ENCODE measurements at regions of chr4 and their contacts with region 1.

Region 1: DNA sequence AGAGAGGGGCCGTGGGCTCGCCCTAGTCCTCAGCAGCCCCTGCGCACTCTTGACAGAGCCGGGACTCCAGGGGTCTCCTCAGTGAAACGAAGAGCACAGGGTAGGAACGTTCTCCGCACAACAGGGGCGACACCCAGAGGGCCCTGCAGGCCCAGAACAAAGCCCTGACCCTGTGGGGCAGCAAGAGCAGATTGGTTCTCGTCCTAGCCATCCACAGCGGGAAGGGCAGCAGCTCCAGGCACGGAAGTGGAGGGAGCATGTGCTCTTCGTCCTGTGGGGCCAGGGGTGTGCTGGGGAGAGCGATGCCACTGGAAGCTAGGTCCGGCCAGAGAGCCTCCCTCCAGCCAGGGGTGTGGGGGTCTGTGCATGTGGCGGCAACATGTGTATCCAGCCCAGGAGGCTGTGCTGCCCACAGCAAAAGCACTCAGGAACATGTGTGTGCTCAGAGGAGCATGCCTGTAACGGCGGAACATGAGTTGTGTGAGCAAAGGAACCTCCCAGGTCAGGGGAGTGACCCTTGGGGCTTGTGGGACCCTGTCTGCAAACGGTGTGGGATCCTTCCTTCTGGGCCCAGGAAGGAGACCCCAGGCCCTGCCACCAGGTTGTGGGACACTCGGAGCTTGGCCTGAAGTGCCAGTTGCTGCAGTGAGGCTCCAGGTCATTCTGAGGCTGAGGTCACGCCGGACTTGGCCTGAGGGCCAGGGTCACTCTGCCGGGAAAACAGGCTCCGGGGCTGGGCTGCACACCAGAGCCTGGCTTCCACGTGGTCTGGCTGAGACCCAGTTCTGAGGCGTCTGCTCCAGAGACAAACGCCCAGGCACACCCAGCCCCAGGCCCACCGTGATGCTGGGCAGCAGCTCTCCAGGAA is 37.3 kb downstream of the CPLX1 start:
- DNase-seq: no peak
- H3K4me3 ChIP-seq: no peak overlapping the region
- H3K27ac ChIP-seq: no peak overlapping the region
- H3K4me1 ChIP-seq: no peaks in the 10 kb centered on the region
- H3K27me3 ChIP-seq: peaks cover 2% of the 10 kb centered on the region
- CTCF ChIP-seq: no peak

Region 2: GRCh38 chr4:575281-576141 is 213.2 kb before region 1 on chr4:
- CTCF ChIA-PET with region 1: no interaction called
- POLR2A ChIA-PET with region 1: no interaction called
- intact Hi-C with region 1: no loop called
- DNase-seq: peak; percentile 71
- H3K4me3 ChIP-seq: peak overlapping the region; percentile 51
- H3K27ac ChIP-seq: peak overlapping the region; percentile 57
- H3K4me1 ChIP-seq: peaks cover 16% of the 10 kb centered on the region
- H3K27me3 ChIP-seq: peaks cover 28% of the 10 kb centered on the region
- CTCF ChIP-seq: no peak

Region 3: DNA sequence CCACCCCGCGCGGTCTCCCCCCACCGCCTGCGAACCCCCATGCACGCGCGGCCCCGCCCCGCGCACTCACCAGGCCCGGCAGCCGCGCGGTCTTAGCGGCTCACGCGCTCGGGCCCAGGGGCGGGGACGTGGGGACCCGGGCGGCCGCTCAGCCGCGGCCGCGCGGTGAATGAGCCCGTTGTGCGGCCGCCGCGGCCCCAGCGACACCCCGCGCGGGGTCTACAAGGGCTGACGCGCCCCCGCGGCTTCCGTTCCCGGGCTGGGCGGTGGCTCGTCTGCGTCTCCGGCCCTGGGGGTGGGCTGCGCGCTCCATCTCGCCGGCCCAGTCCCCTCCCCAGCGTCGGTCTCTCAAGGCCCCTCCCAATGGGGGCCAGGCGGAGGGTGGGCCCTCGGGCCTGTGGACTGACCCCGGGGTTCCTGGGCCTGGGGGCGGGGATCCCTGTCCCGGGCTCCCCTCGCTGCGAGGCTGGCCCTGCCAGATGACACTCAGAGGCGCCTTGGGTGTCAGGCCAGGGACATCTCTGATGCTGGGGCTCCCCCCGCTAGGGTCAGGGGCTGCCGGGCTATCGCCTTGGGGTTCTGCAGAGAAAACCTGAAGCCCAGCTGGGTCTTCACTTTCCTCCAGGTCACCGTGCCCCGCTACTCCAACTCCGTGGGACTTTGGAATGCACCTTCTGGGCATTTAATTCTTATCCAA is 208.9 kb after region 1 on chr4:
- CTCF ChIA-PET with region 1: no interaction called
- POLR2A ChIA-PET with region 1: no interaction called
- intact Hi-C with region 1: no loop called
- DNase-seq: no peak
- H3K4me3 ChIP-seq: peak overlapping the region; percentile 32
- H3K27ac ChIP-seq: no peak overlapping the region
- H3K4me1 ChIP-seq: peaks cover 13% of the 10 kb centered on the region
- H3K27me3 ChIP-seq: peaks cover 61% of the 10 kb centered on the region
- CTCF ChIP-seq: no peak

Region 4: DNA sequence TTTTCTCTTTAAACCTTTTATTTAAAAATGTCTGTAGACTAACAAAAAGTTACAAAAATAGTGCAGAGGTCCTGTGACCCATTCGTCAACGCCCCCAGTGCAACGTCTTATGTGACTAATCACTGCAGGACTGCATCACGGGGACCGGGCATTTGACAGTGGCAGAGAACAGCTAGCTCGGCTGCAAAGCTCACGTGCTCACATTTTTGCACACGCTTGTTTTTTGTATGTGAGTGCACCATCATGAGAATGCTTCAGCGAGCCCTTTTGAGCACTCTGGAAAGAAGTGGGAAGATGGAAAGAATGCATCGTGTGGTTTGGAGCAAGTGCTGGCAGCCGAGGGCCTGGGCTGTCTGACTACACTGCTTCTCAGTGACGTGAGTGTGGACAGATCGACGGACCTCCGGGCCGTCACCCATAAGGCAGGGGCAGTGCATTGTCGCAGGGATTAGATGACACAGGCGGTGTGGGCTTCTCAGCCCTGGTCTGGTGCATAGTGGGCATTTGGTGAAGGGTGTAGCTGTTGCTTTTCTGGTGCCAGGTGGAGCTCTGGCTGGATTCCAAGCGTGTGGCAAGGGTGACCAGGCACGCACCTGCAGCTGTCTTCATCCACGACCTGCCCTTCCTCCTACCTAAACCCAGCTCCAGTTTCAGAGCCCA is 366.0 kb after region 1 on chr4:
- CTCF ChIA-PET with region 1: no interaction called
- POLR2A ChIA-PET with region 1: no interaction called
- intact Hi-C with region 1: no loop called
- DNase-seq: no peak
- H3K4me3 ChIP-seq: no peak overlapping the region
- H3K27ac ChIP-seq: no peak overlapping the region
- H3K4me1 ChIP-seq: no peaks in the 10 kb centered on the region
- H3K27me3 ChIP-seq: peaks cover 69% of the 10 kb centered on the region
- CTCF ChIP-seq: no peak

Region 5: GRCh38 chr4:1183985-1184773 is 395.5 kb after region 1 on chr4:
- CTCF ChIA-PET with region 1: no interaction called
- POLR2A ChIA-PET with region 1: interaction called, 12 read pairs
- intact Hi-C with region 1: no loop called
- DNase-seq: no peak
- H3K4me3 ChIP-seq: no peak overlapping the region
- H3K27ac ChIP-seq: no peak overlapping the region
- H3K4me1 ChIP-seq: no peaks in the 10 kb centered on the region
- H3K27me3 ChIP-seq: peaks cover 18% of the 10 kb centered on the region
- CTCF ChIP-seq: no peak

Region 6: DNA sequence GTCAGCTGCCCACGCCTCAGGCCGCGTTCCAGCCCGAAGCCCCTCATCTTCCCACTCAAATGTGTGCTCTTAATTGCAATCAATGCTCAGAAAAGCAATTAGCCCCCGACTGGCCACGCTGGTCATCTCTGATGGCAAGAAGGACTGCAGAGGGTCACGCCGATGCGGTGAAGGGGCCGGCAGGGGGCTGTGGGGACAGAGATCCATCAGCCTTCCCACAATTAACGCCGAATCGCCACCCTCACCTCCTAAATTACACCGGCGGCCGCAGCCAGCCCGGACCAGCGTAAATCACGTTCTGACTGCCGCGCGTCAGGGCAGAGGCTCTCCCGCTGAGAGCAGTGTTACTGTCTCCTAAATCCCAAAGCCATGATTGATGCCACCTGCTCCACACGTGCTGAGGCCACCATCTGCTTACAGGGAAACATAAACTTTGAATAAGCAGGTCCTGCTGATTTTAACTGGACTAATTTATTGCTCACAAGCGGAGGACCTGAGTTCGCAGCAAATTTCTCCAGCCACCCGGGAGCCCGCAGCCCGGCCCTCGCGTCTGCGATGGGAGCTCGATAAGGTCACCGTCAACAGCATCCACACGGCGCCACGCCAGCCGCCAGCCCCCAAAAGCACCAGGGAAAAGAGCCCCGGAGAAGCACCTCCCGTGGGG is 744.9 kb after region 1 on chr4:
- CTCF ChIA-PET with region 1: no interaction called
- POLR2A ChIA-PET with region 1: no interaction called
- intact Hi-C with region 1: no loop called
- DNase-seq: peak; percentile 84
- H3K4me3 ChIP-seq: no peak overlapping the region
- H3K27ac ChIP-seq: peak overlapping the region; percentile 21
- H3K4me1 ChIP-seq: peaks cover 16% of the 10 kb centered on the region
- H3K27me3 ChIP-seq: peaks cover 46% of the 10 kb centered on the region
- CTCF ChIP-seq: no peak